ENCODE measurements at regions of chr4 and their contacts with region 1.

Region 1: DNA sequence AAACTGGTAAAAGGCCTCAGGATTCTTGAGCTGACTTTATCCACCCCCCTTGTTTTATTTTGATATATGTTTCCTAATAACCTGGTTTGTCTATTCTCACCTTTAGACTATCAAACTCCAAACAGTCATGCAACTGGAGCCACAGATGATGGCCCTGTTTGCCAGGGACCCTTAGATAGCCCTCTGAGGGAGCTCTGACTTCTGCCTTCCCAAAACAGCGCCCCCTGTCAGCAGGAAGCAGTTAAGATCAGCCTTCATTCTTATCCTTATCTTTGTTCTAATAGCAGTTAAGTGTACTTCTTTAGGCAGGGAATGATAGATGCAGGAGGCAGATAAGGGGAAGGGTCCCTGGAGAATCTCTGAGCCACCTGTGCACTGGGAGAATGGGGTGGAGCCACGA is 27.5 kb upstream of the CXCL13 start:
- DNase-seq: no peak
- CTCF ChIP-seq: no peak

Region 2: DNA sequence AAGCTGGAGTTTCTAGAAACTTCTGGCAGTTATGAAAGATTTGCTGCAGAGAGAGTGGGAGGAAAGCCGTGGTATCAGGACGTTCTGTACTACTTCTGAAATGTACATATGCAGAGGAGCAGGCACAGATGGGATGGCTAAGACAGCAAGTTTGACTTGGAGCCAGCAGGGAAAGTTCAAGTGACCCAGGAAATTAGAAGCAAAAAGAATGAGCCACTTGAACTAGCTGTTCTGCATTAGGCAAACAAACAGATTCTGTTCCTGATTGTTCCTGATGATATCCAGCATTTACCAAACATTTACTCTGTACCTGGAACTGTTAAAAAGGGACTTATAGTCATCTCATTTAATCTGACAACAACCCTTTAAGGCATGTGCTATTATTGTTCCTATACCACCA is 13.9 kb before region 1 on chr4:
- CTCF ChIA-PET with region 1: interaction called, 14 read pairs
- POLR2A ChIA-PET with region 1: no interaction called
- DNase-seq: no peak
- CTCF ChIP-seq: no peak